CD8-positive, alpha-beta T cell (primary cell): ENCODE measurements at regions of chr3 and their contacts with region 1.

Region 1: GRCh38 chr3:136075218-136075808 is 109.8 kb downstream of the PPP2R3A start:
- DNase-seq: peak; percentile 52 to 85 (median 74)
- ATAC-seq: peak; percentile 55
- H3K4me3 ChIP-seq: no peak overlapping the region
- H3K4me3 Mint-ChIP-seq: no peak overlapping the region
- H3K27ac ChIP-seq: no peak overlapping the region
- H3K27ac Mint-ChIP-seq: no peak overlapping the region
- H3K4me1 ChIP-seq: no peaks in the 10 kb centered on the region
- H3K4me1 Mint-ChIP-seq: peaks cover 4% of the 10 kb centered on the region
- H3K27me3 ChIP-seq: no peaks in the 10 kb centered on the region
- H3K27me3 Mint-ChIP-seq: no peaks in the 10 kb centered on the region
- CTCF ChIP-seq: peak; percentile 99

Region 2: GRCh38 chr3:136105044-136105443 is 29.7 kb after region 1 on chr3:
- CTCF ChIA-PET with region 1: no interaction called
- POLR2A ChIA-PET with region 1: no interaction called
- intact Hi-C with region 1: no loop called
- DNase-seq: no peak
- ATAC-seq: no peak
- H3K4me3 ChIP-seq: no peak overlapping the region
- H3K4me3 Mint-ChIP-seq: no peak overlapping the region
- H3K27ac ChIP-seq: no peak overlapping the region
- H3K27ac Mint-ChIP-seq: no peak overlapping the region
- H3K4me1 ChIP-seq: no peaks in the 10 kb centered on the region
- H3K4me1 Mint-ChIP-seq: peaks cover 9% of the 10 kb centered on the region
- H3K27me3 ChIP-seq: no peaks in the 10 kb centered on the region
- H3K27me3 Mint-ChIP-seq: no peaks in the 10 kb centered on the region
- CTCF ChIP-seq: no peak

Region 3: GRCh38 chr3:136177876-136178275 is 102.6 kb after region 1 on chr3:
- CTCF ChIA-PET with region 1: no interaction called
- POLR2A ChIA-PET with region 1: no interaction called
- intact Hi-C with region 1: loop called (anchors 1 to 5 kb)
- DNase-seq: no peak
- ATAC-seq: no peak
- H3K4me3 ChIP-seq: no peak overlapping the region
- H3K4me3 Mint-ChIP-seq: no peak overlapping the region
- H3K27ac ChIP-seq: no peak overlapping the region
- H3K27ac Mint-ChIP-seq: no peak overlapping the region
- H3K4me1 ChIP-seq: peaks cover 87% of the 10 kb centered on the region
- H3K4me1 Mint-ChIP-seq: peaks cover 64% of the 10 kb centered on the region
- H3K27me3 ChIP-seq: no peaks in the 10 kb centered on the region
- H3K27me3 Mint-ChIP-seq: no peaks in the 10 kb centered on the region
- CTCF ChIP-seq: no peak

Region 4: GRCh38 chr3:136305878-136306277 is 230.6 kb after region 1 on chr3:
- CTCF ChIA-PET with region 1: interaction called, 3 read pairs
- POLR2A ChIA-PET with region 1: no interaction called
- intact Hi-C with region 1: loop called in 1 of 2 experiments (anchors 5 kb)
- DNase-seq: peak in 1 of 9 experiments; percentile 8
- ATAC-seq: no peak
- H3K4me3 ChIP-seq: no peak overlapping the region
- H3K4me3 Mint-ChIP-seq: no peak overlapping the region
- H3K27ac ChIP-seq: no peak overlapping the region
- H3K27ac Mint-ChIP-seq: no peak overlapping the region
- H3K4me1 ChIP-seq: no peaks in the 10 kb centered on the region
- H3K4me1 Mint-ChIP-seq: no peaks in the 10 kb centered on the region
- H3K27me3 ChIP-seq: no peaks in the 10 kb centered on the region
- H3K27me3 Mint-ChIP-seq: no peaks in the 10 kb centered on the region
- CTCF ChIP-seq: peak; percentile 43

Region 5: GRCh38 chr3:136545664-136546268 is 470.5 kb after region 1 on chr3:
- CTCF ChIA-PET with region 1: no interaction called
- POLR2A ChIA-PET with region 1: no interaction called
- intact Hi-C with region 1: loop called in 1 of 2 experiments (anchors 5 kb)
- DNase-seq: peak in 2 of 9 experiments; percentile 7 to 20
- ATAC-seq: no peak
- H3K4me3 ChIP-seq: no peak overlapping the region
- H3K4me3 Mint-ChIP-seq: no peak overlapping the region
- H3K27ac ChIP-seq: no peak overlapping the region
- H3K27ac Mint-ChIP-seq: no peak overlapping the region
- H3K4me1 ChIP-seq: no peaks in the 10 kb centered on the region
- H3K4me1 Mint-ChIP-seq: peaks cover 24% of the 10 kb centered on the region
- H3K27me3 ChIP-seq: no peaks in the 10 kb centered on the region
- H3K27me3 Mint-ChIP-seq: no peaks in the 10 kb centered on the region
- CTCF ChIP-seq: no peak

Region 6: GRCh38 chr3:137105277-137105977 is 1030.1 kb after region 1 on chr3:
- CTCF ChIA-PET with region 1: no interaction called
- POLR2A ChIA-PET with region 1: no interaction called
- intact Hi-C with region 1: loop called in 1 of 2 experiments (anchors 10 kb)
- DNase-seq: peak in 2 of 9 experiments; percentile 43 to 57
- ATAC-seq: no peak
- H3K4me3 ChIP-seq: no peak overlapping the region
- H3K4me3 Mint-ChIP-seq: no peak overlapping the region
- H3K27ac ChIP-seq: no peak overlapping the region
- H3K27ac Mint-ChIP-seq: no peak overlapping the region
- H3K4me1 ChIP-seq: no peaks in the 10 kb centered on the region
- H3K4me1 Mint-ChIP-seq: no peaks in the 10 kb centered on the region
- H3K27me3 ChIP-seq: no peaks in the 10 kb centered on the region
- H3K27me3 Mint-ChIP-seq: peaks cover 18% of the 10 kb centered on the region
- CTCF ChIP-seq: peak; percentile 53